Psoas muscle (tissue), 8 donors: ENCODE measurements at regions of chr1 and their contacts with region 1.

Region 1: GRCh38 chr1:111507411-111508201 is 4.2 kb upstream of the ADORA3 start:
- DNase-seq: peak; percentile 80 to 86
- ATAC-seq: peak; percentile 74 to 83 (median 75)
- H3K4me3 ChIP-seq: peak overlapping the region; percentile 40
- H3K27ac ChIP-seq: peak overlapping the region; percentile 89
- H3K4me1 ChIP-seq: peaks cover 27% of the 10 kb centered on the region
- H3K27me3 ChIP-seq: no peaks in the 10 kb centered on the region
- CTCF ChIP-seq: no peak

Region 2: DNA sequence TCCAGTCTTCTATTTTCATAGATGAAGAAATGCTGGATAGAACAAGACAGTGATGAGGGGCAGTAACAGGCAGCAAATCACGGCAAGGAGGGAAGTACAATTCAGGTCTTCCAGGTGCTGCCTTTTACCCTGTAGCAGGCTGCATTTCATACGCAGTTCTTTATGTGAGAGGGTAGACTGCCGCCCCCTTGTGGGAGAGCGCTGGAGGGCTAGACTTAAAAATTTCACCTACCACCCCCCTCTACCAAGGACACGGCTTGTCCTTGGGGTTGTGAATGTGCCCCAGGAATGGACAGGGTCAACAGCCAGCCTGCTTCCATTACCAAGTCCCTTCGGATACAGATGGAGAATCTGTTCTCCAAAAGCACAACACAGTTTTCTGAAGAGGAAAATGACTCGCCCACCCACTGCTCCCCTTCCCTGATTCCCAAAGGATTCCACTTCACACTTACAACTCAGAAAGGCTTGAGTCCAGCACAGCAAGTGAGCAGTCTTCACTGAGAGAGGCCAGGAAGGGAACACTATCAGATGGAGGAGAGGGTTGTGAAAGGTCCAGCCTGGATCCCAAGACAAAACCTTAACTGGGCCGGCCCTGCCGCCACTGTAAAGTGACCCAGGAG is 65.9 kb before region 1 on chr1:
- intact Hi-C with region 1: loop called in 1 of 2 experiments (anchors 5 kb)
- DNase-seq: peak in 1 of 2 donors; percentile 26
- ATAC-seq: no peak
- H3K4me3 ChIP-seq: no peak overlapping the region
- H3K27ac ChIP-seq: no peak overlapping the region
- H3K4me1 ChIP-seq: no peaks in the 10 kb centered on the region
- H3K27me3 ChIP-seq: no peaks in the 10 kb centered on the region
- CTCF ChIP-seq: no peak

Region 3: DNA sequence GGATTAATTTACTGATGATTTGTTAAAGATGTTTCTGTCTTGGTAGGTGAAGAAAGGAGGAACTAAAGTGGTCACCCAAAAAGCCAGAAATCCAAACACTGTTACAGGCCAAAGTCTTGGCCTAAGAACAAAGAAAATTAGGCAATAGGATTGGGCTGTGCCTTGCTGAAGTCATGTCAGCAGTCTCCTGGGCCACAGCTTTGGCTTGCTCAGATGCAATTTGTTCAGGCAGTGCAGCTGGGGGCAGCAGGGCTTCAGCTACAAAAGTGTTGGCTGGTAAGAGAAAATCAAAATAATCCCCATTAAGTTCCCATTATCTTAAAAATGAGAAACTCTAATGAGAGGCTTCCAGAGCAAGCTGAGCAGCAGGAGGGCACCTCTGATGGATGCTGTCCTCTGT is 98.0 kb after region 1 on chr1:
- intact Hi-C with region 1: no loop called
- DNase-seq: peak; percentile 62 to 79
- ATAC-seq: peak in 3 of 4 donors; percentile 50 to 76 (median 51)
- H3K4me3 ChIP-seq: no peak overlapping the region
- H3K27ac ChIP-seq: no peak overlapping the region
- H3K4me1 ChIP-seq: peaks cover 8% of the 10 kb centered on the region
- H3K27me3 ChIP-seq: no peaks in the 10 kb centered on the region
- CTCF ChIP-seq: no peak

Region 4: DNA sequence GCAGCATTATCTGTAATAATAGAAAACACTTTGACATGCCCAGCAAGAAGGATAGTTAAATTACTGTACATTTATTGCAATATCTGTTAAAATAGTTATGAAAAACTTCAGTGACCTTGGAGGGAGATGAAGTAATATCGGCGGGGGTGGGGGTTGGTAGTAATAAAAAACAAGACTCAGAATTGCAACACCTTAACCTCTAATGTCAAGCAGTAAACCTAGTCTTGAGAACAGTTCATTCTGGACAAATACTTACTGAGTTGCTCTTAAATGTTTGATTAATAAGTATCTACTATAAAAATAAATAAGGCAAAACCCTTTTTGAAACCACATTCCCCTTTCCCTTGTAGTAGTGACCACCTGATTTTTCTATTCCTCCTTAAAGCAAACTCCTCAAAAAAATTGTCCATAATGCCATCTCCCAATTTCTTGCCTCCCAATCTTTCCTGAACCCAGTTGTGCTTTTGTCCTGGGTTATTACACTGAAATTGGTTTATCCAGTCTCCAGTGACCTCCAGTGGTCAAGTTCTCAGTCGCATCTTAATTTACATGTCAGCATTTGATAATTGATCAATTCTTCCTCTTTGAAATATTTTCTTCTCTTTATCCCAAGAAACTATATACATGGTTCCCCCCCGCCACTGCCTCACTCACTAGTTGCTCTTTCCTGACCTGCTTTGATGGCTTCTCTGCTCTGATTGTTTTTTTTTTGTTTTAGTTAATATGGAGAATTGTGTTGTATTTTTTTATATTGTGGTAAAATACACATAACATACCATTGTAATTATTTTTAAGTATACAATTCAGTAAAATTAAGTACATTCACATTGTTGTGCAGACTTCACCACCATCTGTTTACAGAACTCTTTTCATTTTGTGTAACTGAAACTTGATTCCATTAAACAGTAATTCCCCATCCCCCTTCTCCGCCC is 148.7 kb after region 1 on chr1:
- intact Hi-C with region 1: loop called (anchors 2 kb)
- DNase-seq: no peak
- ATAC-seq: peak; percentile 52 to 90 (median 68)
- H3K4me3 ChIP-seq: no peak overlapping the region
- H3K27ac ChIP-seq: no peak overlapping the region
- H3K4me1 ChIP-seq: peaks cover 28% of the 10 kb centered on the region
- H3K27me3 ChIP-seq: no peaks in the 10 kb centered on the region
- CTCF ChIP-seq: peak; percentile 70

Region 5: DNA sequence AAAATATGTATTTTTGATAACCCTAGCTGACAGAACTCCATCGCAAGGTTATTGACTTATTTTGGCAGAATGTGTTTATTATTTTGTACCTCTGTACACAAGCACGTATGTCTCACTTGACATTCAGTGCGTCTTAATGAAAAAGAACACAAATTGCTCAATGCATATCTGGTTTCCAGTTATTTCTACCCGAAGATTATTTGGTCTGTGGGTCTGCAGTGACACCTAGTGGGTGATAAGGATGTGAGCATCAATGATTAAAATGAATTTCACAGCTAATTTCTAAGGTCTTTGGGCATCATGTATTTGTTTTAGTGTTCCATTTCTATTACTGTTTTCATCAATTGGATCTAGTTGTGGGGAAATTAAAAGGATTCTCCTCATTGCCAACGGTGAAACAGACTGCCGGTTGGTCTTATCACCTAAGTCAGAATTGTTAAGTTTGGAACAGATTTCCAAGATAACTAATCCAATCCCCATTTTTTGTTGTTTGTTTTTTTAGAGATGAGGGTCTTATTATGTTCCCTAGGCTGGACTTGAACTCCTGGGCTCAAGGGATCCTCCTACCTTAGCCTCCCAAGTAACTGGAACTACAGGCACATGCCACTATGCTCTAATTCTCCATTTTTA is 262.0 kb after region 1 on chr1:
- intact Hi-C with region 1: loop called in 1 of 2 experiments (anchors 5 kb)
- DNase-seq: no peak
- ATAC-seq: peak; percentile 82 to 97 (median 93)
- H3K4me3 ChIP-seq: peak overlapping the region; percentile 35
- H3K27ac ChIP-seq: peak overlapping the region; percentile 50
- H3K4me1 ChIP-seq: peaks cover 10% of the 10 kb centered on the region
- H3K27me3 ChIP-seq: no peaks in the 10 kb centered on the region
- CTCF ChIP-seq: peak; percentile 90